Calu3 (cell line): ENCODE measurements at regions of chr7 and their contacts with region 1.

Region 1: DNA sequence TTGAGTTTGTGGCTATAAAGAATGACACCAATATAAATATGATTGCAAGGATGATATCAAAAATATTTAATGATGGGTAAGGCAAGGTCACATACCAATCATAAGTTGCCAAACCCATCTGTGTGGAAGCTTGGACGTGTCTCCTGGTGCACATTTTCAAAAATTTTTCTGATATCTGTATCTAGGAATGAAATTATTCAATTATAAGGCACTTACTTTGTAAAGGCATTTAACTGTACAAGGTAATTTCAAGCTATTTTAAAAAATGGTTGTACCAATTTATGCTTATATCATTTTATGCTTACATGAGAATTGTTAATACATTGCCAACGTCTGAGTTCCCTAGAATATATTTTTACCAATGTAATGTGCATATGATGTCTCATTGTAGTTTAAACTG is 306.4 kb upstream of the CACNA2D1 start:
- DNase-seq: no peak
- H3K4me3 Mint-ChIP-seq: no peak overlapping the region
- H3K27ac Mint-ChIP-seq: no peak overlapping the region
- H3K4me1 Mint-ChIP-seq: no peaks in the 10 kb centered on the region
- H3K27me3 Mint-ChIP-seq: no peaks in the 10 kb centered on the region
- CTCF ChIP-seq: no peak

Region 2: DNA sequence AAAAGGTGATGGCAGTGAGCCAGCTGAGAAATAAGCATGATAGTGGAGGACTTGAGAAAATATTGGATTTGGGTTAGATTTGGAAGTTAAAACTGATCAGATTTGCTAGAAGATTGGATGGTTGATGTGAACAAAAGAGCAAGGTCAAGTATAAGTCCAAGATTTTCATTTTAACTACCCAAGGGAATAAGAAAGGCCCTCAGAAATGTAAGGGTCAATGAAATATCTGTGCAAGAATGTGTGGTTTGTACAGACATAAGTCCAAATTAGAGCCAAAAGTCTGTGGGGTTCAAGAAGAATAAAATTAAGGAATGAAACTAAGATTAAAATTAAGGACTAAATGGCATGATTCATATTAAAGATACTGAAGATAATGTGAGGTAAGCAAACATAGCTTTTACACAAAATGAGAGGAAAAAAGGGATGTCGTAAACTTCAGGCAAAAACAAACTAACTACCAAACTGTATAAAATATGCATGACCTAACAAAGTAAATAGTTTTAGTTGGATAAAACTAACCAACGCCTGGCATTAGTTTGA is 228.0 kb before region 1 on chr7:
- CTCF ChIA-PET with region 1: no interaction called
- intact Hi-C with region 1: no loop called
- DNase-seq: no peak
- H3K4me3 Mint-ChIP-seq: no peak overlapping the region
- H3K27ac Mint-ChIP-seq: no peak overlapping the region
- H3K4me1 Mint-ChIP-seq: peaks cover 10% of the 10 kb centered on the region
- H3K27me3 Mint-ChIP-seq: no peaks in the 10 kb centered on the region
- CTCF ChIP-seq: no peak

Region 3: GRCh38 chr7:82985144-82985802 is 235.3 kb after region 1 on chr7:
- CTCF ChIA-PET with region 1: no interaction called
- intact Hi-C with region 1: loop called (anchors 5 kb)
- DNase-seq: no peak
- H3K4me3 Mint-ChIP-seq: no peak overlapping the region
- H3K27ac Mint-ChIP-seq: no peak overlapping the region
- H3K4me1 Mint-ChIP-seq: no peaks in the 10 kb centered on the region
- H3K27me3 Mint-ChIP-seq: no peaks in the 10 kb centered on the region
- CTCF ChIP-seq: no peak